Heart right ventricle (tissue), 16 donors: ENCODE measurements at regions of chr9 and their contacts with region 1.

Region 1: DNA sequence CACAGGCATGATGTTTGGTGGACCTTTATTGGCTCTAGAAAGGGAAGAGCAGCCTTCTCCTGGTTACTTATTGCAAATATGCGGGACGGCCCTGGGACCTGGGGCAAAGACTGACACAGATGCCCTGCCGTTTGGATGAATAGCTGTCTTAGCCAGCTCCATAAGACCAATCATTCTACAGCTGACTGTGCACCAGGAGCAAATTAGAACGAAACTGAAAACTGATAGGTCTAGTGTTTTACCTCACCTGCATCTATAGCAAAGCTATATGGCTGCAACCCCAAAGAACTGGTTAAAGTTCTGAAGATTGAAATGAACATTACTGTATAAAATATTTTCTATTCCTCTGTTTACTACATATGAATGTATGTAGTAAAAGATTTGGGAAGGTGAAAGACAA is 34.2 kb upstream of the BNC2 start:
- DNase-seq: no peak
- ATAC-seq: no peak
- H3K4me3 ChIP-seq: no peak overlapping the region
- H3K27ac ChIP-seq: no peak overlapping the region
- H3K4me1 ChIP-seq: no peaks in the 10 kb centered on the region
- H3K27me3 ChIP-seq: no peaks in the 10 kb centered on the region
- CTCF ChIP-seq: no peak

Region 2: GRCh38 chr9:16925426-16925825 is 20.8 kb after region 1 on chr9:
- intact Hi-C with region 1: loop called in 1 of 10 experiments (anchors 1 kb)
- DNase-seq: no peak
- ATAC-seq: no peak
- H3K4me3 ChIP-seq: no peak overlapping the region
- H3K27ac ChIP-seq: no peak overlapping the region
- H3K4me1 ChIP-seq: no peaks in the 10 kb centered on the region
- H3K27me3 ChIP-seq: no peaks in the 10 kb centered on the region
- CTCF ChIP-seq: no peak

Region 3: DNA sequence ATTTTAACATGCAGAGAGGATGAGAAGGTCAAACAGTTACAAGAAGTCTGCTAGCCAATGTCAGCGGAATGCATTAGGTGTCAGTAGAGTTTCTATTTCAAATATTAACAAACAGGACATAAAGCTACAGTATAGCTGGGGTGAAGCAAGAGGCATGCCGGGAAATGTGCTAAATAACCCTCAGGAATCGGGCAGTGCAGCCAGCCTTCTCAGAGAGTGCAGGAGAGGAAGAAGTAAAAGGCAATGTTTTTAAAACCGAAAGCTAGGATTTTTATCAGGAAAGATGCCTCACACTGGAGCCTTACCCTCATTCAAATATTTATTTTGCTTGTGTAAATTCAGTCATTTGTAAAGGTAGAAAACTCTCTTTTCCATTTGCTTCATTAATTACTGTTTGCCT is 615.1 kb after region 1 on chr9:
- intact Hi-C with region 1: no loop called
- DNase-seq: no peak
- ATAC-seq: no peak
- H3K4me3 ChIP-seq: no peak overlapping the region
- H3K27ac ChIP-seq: no peak overlapping the region
- H3K4me1 ChIP-seq: no peaks in the 10 kb centered on the region
- H3K27me3 ChIP-seq: no peaks in the 10 kb centered on the region
- CTCF ChIP-seq: no peak